ENCODE measurements at regions of chr7 and their contacts with region 1.

Region 1: DNA sequence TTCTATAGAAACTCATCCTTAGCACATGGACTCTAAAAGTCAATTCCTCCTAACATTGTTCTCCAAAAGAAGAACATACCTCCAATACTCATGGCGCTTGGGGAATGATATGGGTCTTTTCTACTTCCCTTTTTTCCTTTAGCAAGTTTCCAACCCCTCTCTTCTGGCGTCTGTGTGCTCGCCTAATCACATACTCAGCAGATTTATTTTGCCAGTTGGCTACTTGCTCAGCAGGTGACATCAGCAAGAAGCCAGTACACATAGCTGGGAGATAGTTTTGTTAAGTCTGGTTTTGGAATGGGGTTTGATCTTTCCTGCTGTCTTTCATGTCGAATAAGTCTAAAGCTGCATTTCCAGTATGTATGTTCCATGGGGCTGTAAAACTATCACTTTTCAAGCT is 193.8 kb downstream of the POM121L12 start:
- DNase-seq: no peak
- H3K4me3 ChIP-seq: no peak overlapping the region
- H3K27ac ChIP-seq: no peak overlapping the region
- H3K4me1 ChIP-seq: no peaks in the 10 kb centered on the region
- H3K27me3 ChIP-seq: no peaks in the 10 kb centered on the region
- CTCF ChIP-seq: no peak
- EP300 ChIP-seq: no peak
- RAD21 ChIP-seq: no peak

Region 2: DNA sequence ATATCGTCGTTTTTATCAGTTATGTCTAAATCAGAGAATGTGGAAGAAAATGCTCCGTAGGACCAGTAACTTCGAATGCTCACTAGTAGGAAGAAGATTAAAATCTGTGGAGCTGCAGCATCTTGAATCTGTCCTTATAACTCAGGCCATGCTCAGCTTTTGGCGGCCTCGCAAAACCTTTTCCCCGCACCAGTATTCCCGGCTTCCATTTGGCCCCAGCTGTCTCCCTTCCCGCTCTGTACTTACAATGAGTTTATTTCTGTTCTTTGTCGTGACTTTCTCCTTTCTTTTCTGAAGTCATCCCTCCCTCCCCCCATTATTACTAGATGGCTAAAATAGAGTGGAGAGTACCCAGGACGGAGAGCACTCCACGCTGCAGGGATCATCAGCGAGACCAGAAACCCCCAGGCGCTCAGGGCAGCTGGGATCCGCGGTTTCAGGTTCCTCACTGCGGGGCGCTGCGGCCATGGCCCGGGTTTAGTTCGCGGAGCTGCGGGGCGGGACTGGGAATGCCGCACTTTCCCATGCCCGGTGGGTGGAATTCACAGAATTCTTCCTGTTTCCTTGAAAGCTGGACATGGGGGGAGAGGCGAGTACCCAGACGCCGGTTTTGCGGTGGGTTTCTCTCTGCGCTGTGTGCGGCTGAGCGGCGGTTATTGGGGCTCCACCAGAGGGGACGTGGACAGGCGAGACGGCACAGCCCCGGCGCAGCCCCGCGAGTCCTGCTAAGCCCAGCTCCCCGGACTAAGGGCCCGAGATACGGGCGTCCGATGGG is 10.3 kb before region 1 on chr7:
- CTCF ChIA-PET with region 1: interaction called, 13 read pairs
- POLR2A ChIA-PET with region 1: no interaction called
- DNase-seq: peak; percentile 64
- H3K4me3 ChIP-seq: peak overlapping the region in 1 of 2 experiments; percentile 37; a peak in 1 of 4 replicates
- H3K27ac ChIP-seq: no peak overlapping the region
- H3K4me1 ChIP-seq: no peaks in the 10 kb centered on the region
- H3K27me3 ChIP-seq: no peaks in the 10 kb centered on the region
- CTCF ChIP-seq: no peak
- EP300 ChIP-seq: no peak
- RAD21 ChIP-seq: peak; percentile 11; the same call in 1 of the 2 replicates

Region 3: GRCh38 chr7:53246957-53247356 is 17.8 kb after region 1 on chr7:
- CTCF ChIA-PET with region 1: no interaction called
- POLR2A ChIA-PET with region 1: no interaction called
- DNase-seq: no peak
- H3K4me3 ChIP-seq: no peak overlapping the region
- H3K27ac ChIP-seq: no peak overlapping the region
- H3K4me1 ChIP-seq: no peaks in the 10 kb centered on the region; a peak in 1 of 4 replicates
- H3K27me3 ChIP-seq: no peaks in the 10 kb centered on the region
- CTCF ChIP-seq: no peak
- EP300 ChIP-seq: no peak
- RAD21 ChIP-seq: no peak

Measured in SK-N-SH (cell line).